AG04450 (cell line): ENCODE measurements at regions of chr4 and their contacts with region 1.

Region 1: DNA sequence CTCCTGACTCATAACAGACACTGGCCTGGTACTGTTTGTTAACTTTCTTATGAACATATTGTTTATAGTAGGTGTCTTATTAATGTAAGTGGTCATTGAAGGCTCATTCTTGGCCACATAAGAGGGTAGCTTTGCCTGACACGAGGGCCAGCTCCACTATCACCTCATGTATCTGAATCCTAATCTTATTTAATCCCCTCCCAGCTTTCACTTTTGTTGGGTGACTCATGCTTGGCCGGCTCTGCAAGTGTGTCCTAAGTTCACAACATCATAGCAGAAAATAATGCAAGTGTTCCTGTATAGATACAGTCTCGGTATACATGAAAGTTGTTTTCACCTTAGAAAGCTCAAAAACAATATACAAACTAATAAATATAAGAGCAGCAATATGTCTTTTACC is 283.8 kb downstream of the IQCM start:
- DNase-seq: peak; percentile 21
- H3K4me3 ChIP-seq: no peak overlapping the region
- H3K27ac ChIP-seq: no peak overlapping the region
- H3K27me3 ChIP-seq: no peaks in the 10 kb centered on the region
- CTCF ChIP-seq: no peak

Region 2: DNA sequence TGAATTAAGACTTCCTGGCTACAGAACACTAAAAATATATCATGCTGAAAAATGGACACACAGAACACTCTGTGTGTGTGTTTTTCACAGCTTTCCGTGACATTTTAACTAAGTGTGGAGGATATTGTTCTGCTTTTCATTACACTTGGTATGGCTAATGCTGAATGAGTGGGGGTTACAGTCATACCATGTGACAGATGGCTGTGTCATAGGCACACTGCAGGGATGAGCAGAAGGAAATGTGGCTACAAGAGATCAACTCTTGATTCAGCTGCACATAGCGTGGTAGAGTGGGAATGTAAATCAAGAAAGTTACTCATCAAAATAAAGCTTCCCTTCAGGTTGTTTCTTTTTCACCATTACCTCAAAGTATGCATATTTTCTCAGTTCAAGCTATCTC is 386.1 kb before region 1 on chr4:
- CTCF ChIA-PET with region 1: no interaction called
- POLR2A ChIA-PET with region 1: interaction called, 13 read pairs
- DNase-seq: peak; percentile 59
- H3K4me3 ChIP-seq: no peak overlapping the region
- H3K27ac ChIP-seq: no peak overlapping the region
- H3K27me3 ChIP-seq: no peaks in the 10 kb centered on the region
- CTCF ChIP-seq: no peak